CD8-positive, alpha-beta T cell (primary cell): ENCODE measurements at regions of chr2 and their contacts with region 1.

Region 1: GRCh38 chr2:172102391-172103278 is at the start of gene DLX2:
- DNase-seq: peak in 8 of 9 experiments; percentile 42 to 85 (median 66)
- ATAC-seq: peak; percentile 24
- H3K4me3 ChIP-seq: peak within 1 kb of the TSS; percentile 46 to 57
- H3K4me3 Mint-ChIP-seq: peak within 1 kb of the TSS; percentile 80
- H3K27ac ChIP-seq: no peak within 1 kb of the TSS
- H3K27ac Mint-ChIP-seq: no peak within 1 kb of the TSS
- H3K4me1 ChIP-seq: peaks cover 76% of the 10 kb centered on the region
- H3K4me1 Mint-ChIP-seq: peaks cover 46% of the 10 kb centered on the region
- H3K27me3 ChIP-seq: peaks cover 86 to 89% of the 10 kb centered on the region in 2 experiments
- H3K27me3 Mint-ChIP-seq: peaks cover 62% of the 10 kb centered on the region
- CTCF ChIP-seq: no peak
- total RNA-seq, gene DLX2: 0.14 TPM in 1 of 2 experiments, not detected in the other

Region 2: DNA sequence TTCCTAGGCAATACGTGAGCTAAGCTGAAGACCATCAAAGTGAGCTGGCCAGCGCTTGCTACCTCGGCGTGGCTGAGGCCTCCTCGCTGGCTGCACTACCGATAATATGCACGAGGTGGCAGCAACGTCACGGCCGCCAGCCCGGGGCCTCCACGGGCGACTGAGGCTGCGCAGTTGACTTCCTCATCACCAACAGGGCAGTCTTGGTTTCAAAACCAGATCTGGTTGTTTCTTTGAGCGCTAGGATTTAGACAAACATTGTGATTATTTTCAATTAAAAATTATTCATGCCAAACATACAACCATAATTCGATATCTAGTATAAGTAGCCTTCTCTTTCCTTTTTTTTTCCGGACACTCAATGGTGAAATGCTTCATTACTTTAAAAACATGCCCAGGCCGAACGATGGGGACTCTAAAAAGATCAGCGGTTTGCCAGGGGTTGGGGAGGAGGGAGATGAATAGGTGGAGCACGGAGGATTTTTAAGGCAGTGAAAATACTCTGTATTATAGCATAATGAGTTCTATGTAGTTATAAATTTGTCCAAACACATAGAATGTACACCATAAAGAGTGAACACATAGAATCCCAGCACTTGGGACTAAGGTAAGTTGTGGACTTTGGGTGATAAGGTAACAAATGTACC is 528.4 kb before region 1 on chr2:
- CTCF ChIA-PET with region 1: interaction called, 3 read pairs
- POLR2A ChIA-PET with region 1: no interaction called
- intact Hi-C with region 1: loop called in 1 of 2 experiments (anchors 10 kb)
- DNase-seq: peak; percentile 62 to 87 (median 78)
- ATAC-seq: peak; percentile 100
- H3K4me3 ChIP-seq: no peak overlapping the region
- H3K4me3 Mint-ChIP-seq: peak overlapping the region; percentile 42
- H3K27ac ChIP-seq: no peak overlapping the region
- H3K27ac Mint-ChIP-seq: no peak overlapping the region
- H3K4me1 ChIP-seq: no peaks in the 10 kb centered on the region
- H3K4me1 Mint-ChIP-seq: peaks cover 6% of the 10 kb centered on the region
- H3K27me3 ChIP-seq: no peaks in the 10 kb centered on the region
- H3K27me3 Mint-ChIP-seq: peaks cover 2% of the 10 kb centered on the region
- CTCF ChIP-seq: peak; percentile 97

Region 3: GRCh38 chr2:171687287-171688128 is 415.1 kb before region 1 on chr2 and contains the start of gene DYNC1I2:
- CTCF ChIA-PET with region 1: no interaction called
- POLR2A ChIA-PET with region 1: no interaction called
- intact Hi-C with region 1: loop called in 1 of 2 experiments (anchors 2 kb)
- DNase-seq: peak; percentile 33 to 89 (median 69)
- ATAC-seq: peak; percentile 76
- H3K4me3 ChIP-seq: peak within 1 kb of the TSS; percentile 89 to 93
- H3K4me3 Mint-ChIP-seq: peak within 1 kb of the TSS; percentile 94
- H3K27ac ChIP-seq: peak within 1 kb of the TSS; percentile 45 to 52
- H3K27ac Mint-ChIP-seq: peak within 1 kb of the TSS; percentile 91
- H3K4me1 ChIP-seq: peaks cover 11% of the 10 kb centered on the region
- H3K4me1 Mint-ChIP-seq: peaks cover 25% of the 10 kb centered on the region
- H3K27me3 ChIP-seq: no peaks in the 10 kb centered on the region
- H3K27me3 Mint-ChIP-seq: no peaks in the 10 kb centered on the region
- CTCF ChIP-seq: no peak
- total RNA-seq, gene DYNC1I2: 6.9 to 9.1 TPM

Region 4: GRCh38 chr2:171811245-171811628 is 291.4 kb before region 1 on chr2:
- CTCF ChIA-PET with region 1: interaction called, 22 read pairs
- POLR2A ChIA-PET with region 1: no interaction called
- intact Hi-C with region 1: loop called (anchors 2 to 5 kb)
- DNase-seq: peak in 2 of 9 experiments; percentile 22 to 44
- ATAC-seq: no peak
- H3K4me3 ChIP-seq: no peak overlapping the region
- H3K4me3 Mint-ChIP-seq: no peak overlapping the region
- H3K27ac ChIP-seq: no peak overlapping the region
- H3K27ac Mint-ChIP-seq: no peak overlapping the region
- H3K4me1 ChIP-seq: no peaks in the 10 kb centered on the region
- H3K4me1 Mint-ChIP-seq: no peaks in the 10 kb centered on the region
- H3K27me3 ChIP-seq: no peaks in the 10 kb centered on the region
- H3K27me3 Mint-ChIP-seq: no peaks in the 10 kb centered on the region
- CTCF ChIP-seq: peak; percentile 23

Region 5: GRCh38 chr2:171957061-171957460 is 145.6 kb before region 1 on chr2:
- CTCF ChIA-PET with region 1: no interaction called
- POLR2A ChIA-PET with region 1: no interaction called
- intact Hi-C with region 1: loop called in 1 of 2 experiments (anchors 5 kb)
- DNase-seq: peak in 2 of 9 experiments; percentile 19 to 34
- ATAC-seq: no peak
- H3K4me3 ChIP-seq: no peak overlapping the region
- H3K4me3 Mint-ChIP-seq: no peak overlapping the region
- H3K27ac ChIP-seq: no peak overlapping the region
- H3K27ac Mint-ChIP-seq: no peak overlapping the region
- H3K4me1 ChIP-seq: peaks cover 5% of the 10 kb centered on the region
- H3K4me1 Mint-ChIP-seq: peaks cover 30% of the 10 kb centered on the region
- H3K27me3 ChIP-seq: no peaks in the 10 kb centered on the region
- H3K27me3 Mint-ChIP-seq: no peaks in the 10 kb centered on the region
- CTCF ChIP-seq: no peak

Region 6: GRCh38 chr2:172072303-172072702 is 30.3 kb before region 1 on chr2:
- CTCF ChIA-PET with region 1: interaction called, 4 read pairs
- POLR2A ChIA-PET with region 1: no interaction called
- intact Hi-C with region 1: loop called in 1 of 2 experiments (anchors 5 kb)
- DNase-seq: no peak
- ATAC-seq: no peak
- H3K4me3 ChIP-seq: no peak overlapping the region
- H3K4me3 Mint-ChIP-seq: no peak overlapping the region
- H3K27ac ChIP-seq: no peak overlapping the region
- H3K27ac Mint-ChIP-seq: no peak overlapping the region
- H3K4me1 ChIP-seq: no peaks in the 10 kb centered on the region
- H3K4me1 Mint-ChIP-seq: no peaks in the 10 kb centered on the region
- H3K27me3 ChIP-seq: no peaks in the 10 kb centered on the region
- H3K27me3 Mint-ChIP-seq: peaks cover 8% of the 10 kb centered on the region
- CTCF ChIP-seq: no peak

Region 7: GRCh38 chr2:172555522-172556283 is 453.1 kb after region 1 on chr2 and contains the start of gene PDK1:
- CTCF ChIA-PET with region 1: no interaction called
- POLR2A ChIA-PET with region 1: no interaction called
- intact Hi-C with region 1: loop called in 1 of 2 experiments (anchors 5 kb)
- DNase-seq: peak; percentile 81 to 95 (median 90)
- ATAC-seq: peak; percentile 92
- H3K4me3 ChIP-seq: peak within 1 kb of the TSS; percentile 77 to 98
- H3K4me3 Mint-ChIP-seq: peak within 1 kb of the TSS; percentile 94
- H3K27ac ChIP-seq: peak within 1 kb of the TSS; percentile 66 to 82
- H3K27ac Mint-ChIP-seq: peak within 1 kb of the TSS; percentile 86
- H3K4me1 ChIP-seq: peaks cover 33% of the 10 kb centered on the region
- H3K4me1 Mint-ChIP-seq: peaks cover 49% of the 10 kb centered on the region
- H3K27me3 ChIP-seq: no peaks in the 10 kb centered on the region
- H3K27me3 Mint-ChIP-seq: no peaks in the 10 kb centered on the region
- CTCF ChIP-seq: no peak
- total RNA-seq, gene PDK1: 34.1 to 36.6 TPM